MCF 10A (cell line): ENCODE measurements at regions of chr12 and their contacts with region 1.

Region 1: DNA sequence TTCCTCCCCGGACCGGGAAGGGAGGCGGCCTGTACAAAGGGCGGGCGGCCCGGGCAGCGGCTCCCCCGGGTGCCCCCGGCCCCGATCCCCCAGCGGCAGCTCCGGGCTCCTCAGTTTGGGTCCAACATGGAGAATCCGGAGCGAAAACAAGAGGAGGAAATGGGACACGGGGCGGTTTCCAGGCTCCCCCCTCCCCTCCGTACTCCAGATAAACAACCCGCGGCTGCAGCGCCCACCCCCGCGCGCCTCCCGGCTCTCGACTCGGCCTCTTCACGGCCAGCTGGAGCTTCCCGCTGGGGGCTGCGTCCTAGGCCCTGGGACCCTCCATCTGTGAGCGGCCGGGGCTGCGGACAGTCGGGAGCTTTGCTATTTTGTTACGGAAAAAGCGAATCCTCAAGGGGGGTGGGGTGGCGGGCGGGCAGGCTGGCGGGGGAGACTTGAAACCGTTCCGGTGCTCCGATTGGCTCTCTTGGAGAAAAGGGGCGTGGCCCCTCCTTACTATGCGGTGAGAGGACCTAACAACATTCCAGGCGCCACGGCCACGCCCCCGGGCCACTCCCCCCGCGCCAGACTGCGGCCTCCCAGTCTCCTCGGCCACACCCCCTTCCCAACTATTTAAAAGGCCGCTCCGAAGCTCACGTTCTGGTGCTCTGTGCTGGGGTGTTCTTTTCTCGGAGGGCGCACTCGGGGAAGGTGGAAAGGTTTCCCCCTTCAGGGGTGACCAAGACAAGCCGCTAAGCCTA is at the start of gene CTDSP2:
- DNase-seq: peak; percentile 98
- H3K4me3 Mint-ChIP-seq: peak within 1 kb of the TSS; percentile 81
- H3K27ac Mint-ChIP-seq: peak within 1 kb of the TSS; percentile 69
- H3K4me1 Mint-ChIP-seq: peaks cover 25% of the 10 kb centered on the region
- H3K27me3 Mint-ChIP-seq: peaks cover 9% of the 10 kb centered on the region
- CTCF ChIP-seq: no peak
- total RNA-seq, gene CTDSP2: 73.4 and 76.5 TPM in 2 replicates

Region 2: GRCh38 chr12:57782608-57783465 is 63.9 kb before region 1 on chr12 and contains the start of gene TSFM:
- CTCF ChIA-PET with region 1: interaction called, 3 read pairs
- POLR2A ChIA-PET with region 1: interaction called, 11 read pairs
- intact Hi-C with region 1: no loop called
- DNase-seq: peak; percentile 95
- H3K4me3 Mint-ChIP-seq: peak within 1 kb of the TSS; percentile 98
- H3K27ac Mint-ChIP-seq: peak within 1 kb of the TSS; percentile 86
- H3K4me1 Mint-ChIP-seq: peaks cover 25% of the 10 kb centered on the region
- H3K27me3 Mint-ChIP-seq: no peaks in the 10 kb centered on the region
- CTCF ChIP-seq: peak; percentile 90
- total RNA-seq, gene TSFM: 28.4 and 32.6 TPM in 2 replicates

Region 3: GRCh38 chr12:57803319-57803893 is 43.3 kb before region 1 on chr12:
- CTCF ChIA-PET with region 1: interaction called, 10 read pairs
- POLR2A ChIA-PET with region 1: interaction called, 3 read pairs
- intact Hi-C with region 1: no loop called
- DNase-seq: peak; percentile 61
- H3K4me3 Mint-ChIP-seq: no peak overlapping the region
- H3K27ac Mint-ChIP-seq: no peak overlapping the region
- H3K4me1 Mint-ChIP-seq: no peaks in the 10 kb centered on the region
- H3K27me3 Mint-ChIP-seq: no peaks in the 10 kb centered on the region
- CTCF ChIP-seq: peak; percentile 84

Region 4: GRCh38 chr12:57836442-57837375 is 10.0 kb before region 1 on chr12:
- CTCF ChIA-PET with region 1: interaction called, 14 read pairs
- POLR2A ChIA-PET with region 1: interaction called, 38 read pairs
- intact Hi-C with region 1: loop called (anchors 1 kb)
- DNase-seq: peak; percentile 60
- H3K4me3 Mint-ChIP-seq: peak overlapping the region; percentile 46
- H3K27ac Mint-ChIP-seq: peak overlapping the region; percentile 59
- H3K4me1 Mint-ChIP-seq: peaks cover 41% of the 10 kb centered on the region
- H3K27me3 Mint-ChIP-seq: no peaks in the 10 kb centered on the region
- CTCF ChIP-seq: no peak

Region 5: GRCh38 chr12:57865090-57865751 is 18.5 kb after region 1 on chr12:
- CTCF ChIA-PET with region 1: interaction called, 9 read pairs
- POLR2A ChIA-PET with region 1: interaction called, 103 read pairs
- intact Hi-C with region 1: loop called (anchors 2 kb)
- DNase-seq: peak; percentile 81
- H3K4me3 Mint-ChIP-seq: peak overlapping the region; percentile 69
- H3K27ac Mint-ChIP-seq: peak overlapping the region; percentile 82
- H3K4me1 Mint-ChIP-seq: peaks cover 23% of the 10 kb centered on the region
- H3K27me3 Mint-ChIP-seq: no peaks in the 10 kb centered on the region
- CTCF ChIP-seq: no peak

Region 6: GRCh38 chr12:57888409-57889157 is 41.8 kb after region 1 on chr12:
- CTCF ChIA-PET with region 1: interaction called, 71 read pairs
- POLR2A ChIA-PET with region 1: interaction called, 167 read pairs
- intact Hi-C with region 1: loop called (anchors 2 kb)
- DNase-seq: peak; percentile 90
- H3K4me3 Mint-ChIP-seq: peak overlapping the region; percentile 63
- H3K27ac Mint-ChIP-seq: peak overlapping the region; percentile 91
- H3K4me1 Mint-ChIP-seq: peaks cover 49% of the 10 kb centered on the region
- H3K27me3 Mint-ChIP-seq: no peaks in the 10 kb centered on the region
- CTCF ChIP-seq: no peak

Region 7: DNA sequence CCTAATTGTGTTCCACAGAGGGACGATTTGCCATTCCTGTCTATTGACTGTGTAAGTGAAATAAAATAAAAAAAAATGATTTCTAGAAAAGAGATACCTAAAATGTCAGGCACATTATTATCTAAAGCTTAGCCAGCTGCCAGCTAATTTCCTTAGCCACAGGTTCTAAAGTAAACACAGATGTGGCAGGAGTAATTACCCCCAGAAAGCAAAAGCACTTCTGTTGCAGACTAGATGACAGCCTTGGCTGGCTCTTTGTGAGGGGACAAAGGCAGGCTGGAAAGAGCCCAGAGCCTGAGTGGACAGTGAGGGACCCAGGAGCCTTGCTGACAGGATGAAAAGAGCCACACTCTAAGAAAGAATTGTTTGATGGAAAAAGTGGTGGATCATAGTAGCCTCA is 655.5 kb after region 1 on chr12:
- CTCF ChIA-PET with region 1: no interaction called
- POLR2A ChIA-PET with region 1: no interaction called
- intact Hi-C with region 1: no loop called
- DNase-seq: no peak
- H3K4me3 Mint-ChIP-seq: no peak overlapping the region
- H3K27ac Mint-ChIP-seq: no peak overlapping the region
- H3K4me1 Mint-ChIP-seq: no peaks in the 10 kb centered on the region
- H3K27me3 Mint-ChIP-seq: no peaks in the 10 kb centered on the region
- CTCF ChIP-seq: no peak